Activated CD4-positive, alpha-beta memory T cell treated with anti-CD3 and anti-CD28 coated beads for 36 hours (primary cell): ENCODE measurements at regions of chr1 and their contacts with region 1.

Region 1: GRCh38 chr1:197521118-197521739 is 253.2 kb downstream of the CRB1 start:
- DNase-seq: no peak
- H3K4me3 Mint-ChIP-seq: no peak overlapping the region
- H3K27ac Mint-ChIP-seq: no peak overlapping the region
- H3K4me1 Mint-ChIP-seq: peaks cover 6% of the 10 kb centered on the region
- H3K27me3 Mint-ChIP-seq: no peaks in the 10 kb centered on the region

Region 2: DNA sequence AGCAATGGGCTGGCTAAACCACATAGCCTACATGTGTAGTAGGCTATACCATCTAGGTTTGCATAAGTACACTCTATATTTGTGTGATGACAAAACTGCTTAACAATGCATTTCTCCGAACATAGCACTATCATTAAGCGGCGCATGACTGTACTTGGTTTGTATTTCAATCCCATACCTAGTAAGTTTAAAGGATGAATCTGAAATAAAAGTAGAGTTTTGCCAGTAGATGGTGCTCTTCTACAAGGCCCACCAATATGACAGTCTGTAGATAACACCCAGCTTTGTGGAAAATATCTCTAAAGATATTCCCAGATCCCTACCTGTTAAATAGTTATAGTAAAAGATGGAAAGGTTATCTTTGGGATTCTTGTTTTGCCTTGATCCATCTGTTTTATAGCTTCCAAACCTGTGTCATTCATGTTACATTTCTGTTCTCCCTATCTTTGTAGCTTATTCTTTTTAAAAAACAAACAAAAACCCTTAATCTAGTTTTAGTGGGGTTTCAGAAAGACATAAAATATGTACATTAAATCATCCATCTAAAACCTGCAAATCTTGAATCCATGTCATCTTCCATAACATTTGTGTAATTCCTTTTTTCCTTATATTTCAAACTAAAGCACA is 340.9 kb before region 1 on chr1:
- CTCF ChIA-PET with region 1: no interaction called
- POLR2A ChIA-PET with region 1: no interaction called
- intact Hi-C with region 1: loop called (anchors 5 kb)
- DNase-seq: no peak
- H3K4me3 Mint-ChIP-seq: no peak overlapping the region
- H3K27ac Mint-ChIP-seq: no peak overlapping the region
- H3K4me1 Mint-ChIP-seq: peaks cover 3% of the 10 kb centered on the region
- H3K27me3 Mint-ChIP-seq: no peaks in the 10 kb centered on the region

Region 3: GRCh38 chr1:197195100-197195499 is 326.1 kb before region 1 on chr1:
- CTCF ChIA-PET with region 1: no interaction called
- POLR2A ChIA-PET with region 1: no interaction called
- intact Hi-C with region 1: no loop called
- DNase-seq: no peak
- H3K4me3 Mint-ChIP-seq: no peak overlapping the region
- H3K27ac Mint-ChIP-seq: no peak overlapping the region
- H3K4me1 Mint-ChIP-seq: peaks cover 53% of the 10 kb centered on the region
- H3K27me3 Mint-ChIP-seq: no peaks in the 10 kb centered on the region

Region 4: GRCh38 chr1:197614916-197615692 is 93.9 kb after region 1 on chr1:
- CTCF ChIA-PET with region 1: interaction called, 5 read pairs
- POLR2A ChIA-PET with region 1: no interaction called
- intact Hi-C with region 1: loop called (anchors 5 kb)
- DNase-seq: peak; percentile 38
- H3K4me3 Mint-ChIP-seq: no peak overlapping the region
- H3K27ac Mint-ChIP-seq: no peak overlapping the region
- H3K4me1 Mint-ChIP-seq: peaks cover 1% of the 10 kb centered on the region
- H3K27me3 Mint-ChIP-seq: no peaks in the 10 kb centered on the region

Region 5: DNA sequence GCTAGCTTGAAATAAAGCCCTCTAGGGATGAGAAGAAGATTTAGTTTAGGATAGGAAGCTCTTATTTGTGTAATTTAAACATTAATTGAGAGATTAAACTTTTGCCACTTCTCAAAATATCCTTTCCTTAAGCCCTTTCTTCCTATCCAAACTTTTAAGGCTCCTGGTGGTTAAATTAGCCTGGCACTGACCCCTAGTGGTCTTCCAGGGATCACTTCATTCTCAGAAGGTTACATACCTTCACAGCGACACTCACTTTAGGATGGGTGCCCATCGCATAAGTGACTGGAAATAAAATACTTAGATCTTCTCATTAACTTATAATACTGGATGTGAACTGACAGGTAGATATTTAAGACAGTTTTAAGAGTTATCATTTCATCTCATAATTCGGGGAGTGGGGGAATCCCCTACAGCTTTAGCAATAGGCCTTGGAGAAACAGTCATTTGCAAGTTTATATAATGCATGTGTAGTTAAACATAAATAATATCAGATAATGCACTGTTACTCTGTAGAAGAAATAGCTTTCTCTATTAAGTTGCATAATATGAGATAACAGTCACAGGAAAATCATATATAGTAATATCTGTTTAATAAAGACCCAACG is 403.4 kb after region 1 on chr1:
- CTCF ChIA-PET with region 1: interaction called, 18 read pairs
- POLR2A ChIA-PET with region 1: no interaction called
- intact Hi-C with region 1: loop called (anchors 1 kb)
- DNase-seq: peak; percentile 45
- H3K4me3 Mint-ChIP-seq: no peak overlapping the region
- H3K27ac Mint-ChIP-seq: no peak overlapping the region
- H3K4me1 Mint-ChIP-seq: peaks cover 20% of the 10 kb centered on the region
- H3K27me3 Mint-ChIP-seq: peaks cover 56% of the 10 kb centered on the region

Region 6: GRCh38 chr1:198465201-198466144 is 944.2 kb after region 1 on chr1:
- CTCF ChIA-PET with region 1: interaction called, 3 read pairs
- POLR2A ChIA-PET with region 1: no interaction called
- intact Hi-C with region 1: loop called (anchors 2 kb)
- DNase-seq: no peak
- H3K4me3 Mint-ChIP-seq: no peak overlapping the region
- H3K27ac Mint-ChIP-seq: no peak overlapping the region
- H3K4me1 Mint-ChIP-seq: peaks cover 12% of the 10 kb centered on the region
- H3K27me3 Mint-ChIP-seq: no peaks in the 10 kb centered on the region